OCI-LY7 (cell line): ENCODE measurements at regions of chr1 and their contacts with region 1.

Region 1: DNA sequence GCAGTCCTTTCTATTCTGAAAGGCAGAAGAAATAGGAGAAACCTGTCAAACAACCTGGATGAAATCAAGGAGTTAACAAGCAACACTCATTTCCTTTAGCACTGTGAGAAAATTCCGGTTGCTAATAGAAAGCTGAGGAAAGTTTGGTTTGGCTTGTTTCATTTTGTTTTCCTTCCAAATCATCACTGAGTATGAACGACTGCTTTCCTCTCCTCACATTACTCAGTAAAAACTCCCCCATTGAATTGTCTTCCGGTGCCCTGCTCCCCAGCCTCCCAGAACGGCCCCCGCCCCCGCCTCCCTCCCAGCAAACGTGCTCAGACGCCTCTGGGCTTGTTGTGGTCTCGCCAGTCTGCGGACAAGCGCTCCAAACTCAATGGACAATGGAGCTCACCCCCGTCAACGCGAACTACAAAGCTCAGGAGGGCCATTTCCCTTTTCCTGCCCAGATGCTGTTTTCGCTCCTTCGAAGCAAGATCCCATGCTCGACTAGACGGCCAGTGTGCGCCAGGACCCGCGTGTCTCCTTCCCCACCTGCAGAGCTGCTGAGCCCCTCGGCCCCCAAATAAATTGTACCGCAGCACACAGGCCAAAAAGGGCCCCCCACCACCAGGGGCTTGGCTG is 747 bp downstream of the STX6 start:
- DNase-seq: peak; percentile 61
- H3K4me3 ChIP-seq: peak overlapping the region; percentile 92
- H3K27ac ChIP-seq: peak overlapping the region; percentile 34
- H3K4me1 ChIP-seq: peaks cover 33% of the 10 kb centered on the region
- CTCF ChIP-seq: no peak

Region 2: DNA sequence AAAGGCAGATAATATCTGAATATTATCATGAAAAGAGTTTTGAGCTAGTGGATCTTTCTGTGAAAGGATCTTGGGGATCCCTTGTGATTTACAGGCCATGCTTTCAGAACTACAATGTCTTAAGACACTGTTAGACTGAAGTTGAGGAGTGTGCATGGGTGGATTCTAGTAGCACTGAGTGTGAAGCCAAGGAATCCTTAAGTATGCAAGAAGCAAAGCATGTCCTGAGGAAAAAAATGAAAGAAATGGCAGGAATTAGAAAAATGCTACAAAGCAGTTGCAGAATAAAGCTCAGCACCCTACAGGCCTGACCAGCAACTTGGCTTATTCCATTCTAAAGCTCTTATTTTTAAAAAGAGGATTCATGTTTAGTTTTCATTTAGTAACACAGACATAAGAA is 11.1 kb before region 1 on chr1:
- CTCF ChIA-PET with region 1: no interaction called
- POLR2A ChIA-PET with region 1: interaction called, 11 read pairs
- intact Hi-C with region 1: no loop called
- DNase-seq: no peak
- H3K4me3 ChIP-seq: no peak overlapping the region
- H3K27ac ChIP-seq: no peak overlapping the region
- H3K4me1 ChIP-seq: no peaks in the 10 kb centered on the region
- CTCF ChIP-seq: no peak

Region 3: GRCh38 chr1:181033799-181034451 is 12.0 kb after region 1 on chr1 and contains the start of gene MR1:
- CTCF ChIA-PET with region 1: interaction called, 3 read pairs
- POLR2A ChIA-PET with region 1: interaction called, 31 read pairs
- intact Hi-C with region 1: no loop called
- DNase-seq: peak; percentile 93
- H3K4me3 ChIP-seq: peak within 1 kb of the TSS; percentile 81
- H3K27ac ChIP-seq: peak within 1 kb of the TSS; percentile 53
- H3K4me1 ChIP-seq: peaks cover 19% of the 10 kb centered on the region
- CTCF ChIP-seq: no peak
- total RNA-seq, gene MR1: 5.9 and 7.9 TPM in 2 replicates

Region 4: GRCh38 chr1:181117638-181118449 is 95.9 kb after region 1 on chr1:
- CTCF ChIA-PET with region 1: interaction called, 11 read pairs
- POLR2A ChIA-PET with region 1: no interaction called
- intact Hi-C with region 1: no loop called
- DNase-seq: no peak
- H3K4me3 ChIP-seq: no peak overlapping the region
- H3K27ac ChIP-seq: no peak overlapping the region
- H3K4me1 ChIP-seq: no peaks in the 10 kb centered on the region
- CTCF ChIP-seq: no peak